ENCODE measurements at regions of chr6 and their contacts with region 1.

Region 1: GRCh38 chr6:134174672-134175198 is 122.3 kb upstream of the SLC2A12 start:
- DNase-seq: peak; percentile 88 to 97 (median 94)
- ATAC-seq: peak; percentile 77
- H3K4me3 ChIP-seq: peak overlapping the region; percentile 64 to 87
- H3K4me3 Mint-ChIP-seq: peak overlapping the region; percentile 98
- H3K27ac ChIP-seq: peak overlapping the region; percentile 67 to 79
- H3K27ac Mint-ChIP-seq: peak overlapping the region; percentile 94
- H3K4me1 ChIP-seq: peaks cover 63% of the 10 kb centered on the region
- H3K4me1 Mint-ChIP-seq: peaks cover 71% of the 10 kb centered on the region
- H3K27me3 ChIP-seq: no peaks in the 10 kb centered on the region
- H3K27me3 Mint-ChIP-seq: no peaks in the 10 kb centered on the region
- CTCF ChIP-seq: no peak

Region 2: GRCh38 chr6:133952815-133953633 is 221.7 kb before region 1 on chr6 and contains the start of gene TBPL1:
- CTCF ChIA-PET with region 1: no interaction called
- POLR2A ChIA-PET with region 1: no interaction called
- intact Hi-C with region 1: loop called in 1 of 2 experiments (anchors 1 kb)
- DNase-seq: peak; percentile 85 to 97 (median 92)
- ATAC-seq: peak; percentile 85
- H3K4me3 ChIP-seq: peak within 1 kb of the TSS; percentile 73 to 82
- H3K4me3 Mint-ChIP-seq: peak within 1 kb of the TSS; percentile 94
- H3K27ac ChIP-seq: peak within 1 kb of the TSS; percentile 55 to 90
- H3K27ac Mint-ChIP-seq: peak within 1 kb of the TSS; percentile 96
- H3K4me1 ChIP-seq: peaks cover 20% of the 10 kb centered on the region
- H3K4me1 Mint-ChIP-seq: peaks cover 50% of the 10 kb centered on the region
- H3K27me3 ChIP-seq: no peaks in the 10 kb centered on the region
- H3K27me3 Mint-ChIP-seq: no peaks in the 10 kb centered on the region
- CTCF ChIP-seq: no peak
- total RNA-seq, gene TBPL1: 47.8 to 48.7 TPM

Region 3: DNA sequence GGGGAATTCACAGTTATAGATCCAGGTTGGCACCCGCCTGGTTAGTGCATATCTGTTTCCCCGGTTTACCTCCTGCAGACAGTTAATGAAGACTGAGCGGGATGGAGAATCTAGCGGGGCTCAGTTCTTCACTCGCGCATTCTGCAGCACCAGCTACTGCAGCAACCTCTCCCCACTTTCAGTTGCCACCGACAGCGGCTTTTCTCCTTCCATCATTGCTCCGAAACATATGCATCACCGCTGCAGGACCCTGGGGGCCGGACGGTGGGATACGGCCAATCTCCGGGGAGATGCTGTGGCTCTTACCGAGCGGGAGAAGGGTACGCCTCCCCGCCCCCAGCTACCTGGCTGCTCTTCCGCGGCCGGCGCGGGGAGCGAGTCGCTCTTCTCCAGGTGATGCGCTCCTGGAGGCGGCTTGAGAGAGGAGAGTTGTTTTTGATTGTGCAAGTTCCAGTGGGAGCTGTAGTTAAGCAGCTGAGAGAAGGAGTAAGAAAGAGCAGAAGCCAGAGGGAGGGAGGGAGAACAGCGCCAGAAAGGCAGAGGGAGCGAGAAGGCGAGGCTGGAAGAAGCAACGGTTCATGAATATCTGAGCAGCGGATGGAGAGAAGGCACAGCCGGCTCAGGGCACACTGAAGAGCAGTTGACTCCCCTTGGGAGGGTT is 142.9 kb after region 1 on chr6 and contains the start of gene SGK1:
- CTCF ChIA-PET with region 1: no interaction called
- POLR2A ChIA-PET with region 1: no interaction called
- intact Hi-C with region 1: loop called (anchors 2 to 5 kb)
- DNase-seq: peak in 8 of 9 experiments; percentile 7 to 64 (median 30)
- ATAC-seq: peak; percentile 65
- H3K4me3 ChIP-seq: peak within 1 kb of the TSS; percentile 53 to 74
- H3K4me3 Mint-ChIP-seq: peak within 1 kb of the TSS; percentile 91
- H3K27ac ChIP-seq: peak within 1 kb of the TSS in 1 of 2 experiments; percentile 21
- H3K27ac Mint-ChIP-seq: peak within 1 kb of the TSS; percentile 60
- H3K4me1 ChIP-seq: peaks cover 7% of the 10 kb centered on the region
- H3K4me1 Mint-ChIP-seq: peaks cover 18% of the 10 kb centered on the region
- H3K27me3 ChIP-seq: no peaks in the 10 kb centered on the region
- H3K27me3 Mint-ChIP-seq: peaks cover 17% of the 10 kb centered on the region
- CTCF ChIP-seq: no peak
- total RNA-seq, gene SGK1: 127 to 128 TPM

Region 4: GRCh38 chr6:134517145-134517658 is 342.5 kb after region 1 on chr6:
- CTCF ChIA-PET with region 1: interaction called, 4 read pairs
- POLR2A ChIA-PET with region 1: no interaction called
- intact Hi-C with region 1: loop called (anchors 5 to 10 kb)
- DNase-seq: peak in 1 of 9 experiments; percentile 37
- ATAC-seq: no peak
- H3K4me3 ChIP-seq: no peak overlapping the region
- H3K4me3 Mint-ChIP-seq: no peak overlapping the region
- H3K27ac ChIP-seq: no peak overlapping the region
- H3K27ac Mint-ChIP-seq: no peak overlapping the region
- H3K4me1 ChIP-seq: peaks cover 17% of the 10 kb centered on the region
- H3K4me1 Mint-ChIP-seq: peaks cover 28% of the 10 kb centered on the region
- H3K27me3 ChIP-seq: no peaks in the 10 kb centered on the region
- H3K27me3 Mint-ChIP-seq: no peaks in the 10 kb centered on the region
- CTCF ChIP-seq: no peak

Region 5: GRCh38 chr6:134938896-134939295 is 764.2 kb after region 1 on chr6:
- CTCF ChIA-PET with region 1: interaction called, 26 read pairs
- POLR2A ChIA-PET with region 1: no interaction called
- intact Hi-C with region 1: loop called (anchors 1 to 5 kb)
- DNase-seq: peak in 6 of 9 experiments; percentile 4 to 76 (median 40)
- ATAC-seq: peak; percentile 96
- H3K4me3 ChIP-seq: no peak overlapping the region
- H3K4me3 Mint-ChIP-seq: no peak overlapping the region
- H3K27ac ChIP-seq: no peak overlapping the region
- H3K27ac Mint-ChIP-seq: no peak overlapping the region
- H3K4me1 ChIP-seq: peaks cover 9% of the 10 kb centered on the region
- H3K4me1 Mint-ChIP-seq: peaks cover 10% of the 10 kb centered on the region
- H3K27me3 ChIP-seq: no peaks in the 10 kb centered on the region
- H3K27me3 Mint-ChIP-seq: no peaks in the 10 kb centered on the region
- CTCF ChIP-seq: no peak

Region 6: DNA sequence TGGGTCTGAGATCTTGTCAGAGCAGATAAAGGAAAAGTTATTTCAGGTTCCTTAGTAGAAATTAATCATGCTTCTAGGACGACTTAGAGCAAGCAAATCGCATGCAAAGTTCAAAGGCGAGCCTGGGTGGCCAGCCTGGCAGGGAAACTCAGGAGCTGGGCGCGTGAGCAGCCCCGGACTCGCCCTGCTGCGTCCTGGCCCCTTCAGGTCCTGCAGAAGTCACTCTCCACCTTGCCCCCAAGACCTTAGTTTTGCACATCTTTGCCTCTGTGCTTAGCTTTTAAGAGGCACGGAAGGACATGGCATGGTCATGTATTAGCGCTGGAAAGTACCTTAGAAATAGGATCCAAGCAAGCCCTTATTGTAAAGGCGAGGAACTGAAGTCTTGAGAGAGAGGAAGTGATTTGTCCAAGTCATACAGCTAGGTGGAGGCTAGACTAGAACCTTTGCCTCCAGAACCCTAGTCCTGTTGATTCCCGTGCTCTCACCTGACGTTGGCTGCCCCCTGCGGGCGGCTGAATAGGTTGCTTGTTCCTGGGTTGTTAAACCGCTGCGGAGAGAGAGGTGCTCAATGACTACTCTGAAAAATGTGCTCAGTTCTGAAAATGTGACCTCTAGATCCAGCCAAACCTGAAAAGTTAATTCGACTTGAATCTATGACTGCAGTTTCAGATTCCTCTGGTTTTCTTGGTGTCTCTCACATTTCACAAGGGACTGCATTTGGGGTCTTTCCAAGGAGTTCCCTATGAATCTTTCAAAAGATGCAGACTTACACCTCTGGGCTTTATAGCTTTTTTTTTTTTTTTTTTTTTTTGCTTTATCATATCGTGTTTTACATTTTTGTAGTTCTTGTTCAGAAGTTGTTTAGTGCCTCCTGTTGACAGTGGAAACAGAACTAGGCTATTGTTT is 1009.1 kb after region 1 on chr6:
- CTCF ChIA-PET with region 1: no interaction called
- POLR2A ChIA-PET with region 1: no interaction called
- intact Hi-C with region 1: loop called (anchors 2 to 5 kb)
- DNase-seq: peak; percentile 54 to 87 (median 75)
- ATAC-seq: peak; percentile 37
- H3K4me3 ChIP-seq: peak overlapping the region; percentile 52 to 58
- H3K4me3 Mint-ChIP-seq: peak overlapping the region; percentile 91
- H3K27ac ChIP-seq: peak overlapping the region in 1 of 2 experiments; percentile 41
- H3K27ac Mint-ChIP-seq: peak overlapping the region; percentile 84
- H3K4me1 ChIP-seq: peaks cover 9% of the 10 kb centered on the region
- H3K4me1 Mint-ChIP-seq: peaks cover 23% of the 10 kb centered on the region
- H3K27me3 ChIP-seq: no peaks in the 10 kb centered on the region
- H3K27me3 Mint-ChIP-seq: no peaks in the 10 kb centered on the region
- CTCF ChIP-seq: peak; percentile 70

Measured in CD8-positive, alpha-beta T cell (primary cell).